Ovary (tissue), 10 donors: ENCODE measurements at regions of chr5 and their contacts with region 1.

Region 1: GRCh38 chr5:129474544-129474943 is 14.4 kb downstream of the ADAMTS19 start:
- DNase-seq: no peak
- H3K4me3 ChIP-seq: no peak overlapping the region
- H3K27ac ChIP-seq: no peak overlapping the region
- H3K4me1 ChIP-seq: no peaks in the 10 kb centered on the region
- H3K27me3 ChIP-seq: no peaks in the 10 kb centered on the region
- CTCF ChIP-seq: no peak
- EP300 ChIP-seq: no peak
- POLR2A ChIP-seq: no peak

Region 2: GRCh38 chr5:130279386-130279785 is 804.8 kb after region 1 on chr5:
- intact Hi-C with region 1: loop called in 1 of 4 experiments (anchors 5 kb)
- DNase-seq: no peak
- H3K4me3 ChIP-seq: no peak overlapping the region
- H3K27ac ChIP-seq: no peak overlapping the region
- H3K4me1 ChIP-seq: no peaks in the 10 kb centered on the region
- H3K27me3 ChIP-seq: no peaks in the 10 kb centered on the region
- CTCF ChIP-seq: no peak
- EP300 ChIP-seq: no peak
- POLR2A ChIP-seq: no peak

Region 3: GRCh38 chr5:131328536-131329285 is 1854.2 kb after region 1 on chr5:
- intact Hi-C with region 1: no loop called
- DNase-seq: no peak
- H3K4me3 ChIP-seq: no peak overlapping the region
- H3K27ac ChIP-seq: no peak overlapping the region
- H3K4me1 ChIP-seq: peaks cover 3% of the 10 kb centered on the region
- H3K27me3 ChIP-seq: no peaks in the 10 kb centered on the region
- CTCF ChIP-seq: no peak
- EP300 ChIP-seq: no peak
- POLR2A ChIP-seq: no peak